Mammary epithelial cell (primary cell): ENCODE measurements at regions of chr1 and their contacts with region 1.

Region 1: GRCh38 chr1:227805606-227806197 is 9.8 kb upstream of the PRSS38 start:
- DNase-seq: peak; percentile 99
- H3K4me3 ChIP-seq: no peak overlapping the region
- H3K27ac ChIP-seq: peak overlapping the region; percentile 72
- H3K4me1 ChIP-seq: peaks cover 11% of the 10 kb centered on the region
- H3K27me3 ChIP-seq: no peaks in the 10 kb centered on the region
- CTCF ChIP-seq: peak; percentile 23 to 43

Region 2: GRCh38 chr1:227734856-227735538 is 70.7 kb before region 1 on chr1 and contains the starts of genes JMJD4 and SNAP47:
- CTCF ChIA-PET with region 1: no interaction called
- dilution Hi-C with region 1: no loop called
- in situ Hi-C with region 1: no loop called
- intact Hi-C with region 1: no loop called
- DNase-seq: peak; percentile 88
- H3K4me3 ChIP-seq: peak within 1 kb of the TSS; percentile 74 to 81 (median 78)
- H3K27ac ChIP-seq: peak within 1 kb of the TSS; percentile 51
- H3K4me1 ChIP-seq: peaks cover 12% of the 10 kb centered on the region
- H3K27me3 ChIP-seq: no peaks in the 10 kb centered on the region
- CTCF ChIP-seq: no peak
- total RNA-seq, gene JMJD4: 20.9 to 24.7 TPM
- total RNA-seq, gene SNAP47: 24.9 to 41.7 TPM

Region 3: DNA sequence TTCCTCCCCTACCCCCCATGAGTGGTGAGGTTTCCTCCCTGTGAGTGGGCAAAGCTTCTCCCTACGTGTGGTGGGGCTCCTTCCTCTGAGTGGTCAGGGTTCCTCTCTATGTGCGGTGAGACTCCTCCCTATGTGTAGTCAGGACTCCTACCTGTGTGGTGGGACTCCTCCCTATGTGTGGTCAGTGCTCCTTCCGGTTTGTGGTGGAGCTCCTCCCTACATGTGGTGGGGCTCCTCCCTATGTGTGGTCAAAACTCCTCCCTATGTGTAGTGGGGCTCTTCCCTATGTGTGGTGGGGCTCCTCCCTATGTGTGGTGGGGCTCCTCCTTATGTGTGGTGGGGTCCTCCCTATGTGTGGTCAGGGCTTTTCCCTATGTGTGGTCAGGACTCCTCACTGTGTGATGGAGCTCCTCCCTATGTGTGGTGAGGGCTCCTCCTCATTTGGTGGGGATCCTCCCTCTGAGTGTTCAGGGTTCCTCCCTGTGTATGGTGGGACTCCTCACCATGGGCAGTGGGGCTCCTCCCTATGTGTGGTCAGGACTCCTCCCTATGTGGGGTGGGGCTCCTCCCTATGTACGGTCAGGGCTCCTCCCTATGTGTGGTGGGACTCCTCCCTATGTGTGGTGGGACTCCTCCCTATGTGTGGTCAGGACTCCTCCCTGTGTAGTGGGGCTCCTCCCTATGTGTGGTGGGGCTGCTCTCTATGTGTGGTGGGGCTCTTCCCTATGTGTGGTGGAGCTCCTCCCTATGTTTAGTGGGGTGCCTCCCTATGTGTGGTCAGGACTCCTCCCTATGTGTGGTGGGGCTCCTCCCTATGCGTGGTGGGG is 38.8 kb after region 1 on chr1:
- CTCF ChIA-PET with region 1: no interaction called
- dilution Hi-C with region 1: loop called (anchors 5 kb)
- in situ Hi-C with region 1: no loop called
- intact Hi-C with region 1: no loop called
- DNase-seq: no peak
- H3K4me3 ChIP-seq: no peak overlapping the region
- H3K27ac ChIP-seq: no peak overlapping the region
- H3K4me1 ChIP-seq: no peaks in the 10 kb centered on the region
- H3K27me3 ChIP-seq: no peaks in the 10 kb centered on the region
- CTCF ChIP-seq: no peak

Region 4: DNA sequence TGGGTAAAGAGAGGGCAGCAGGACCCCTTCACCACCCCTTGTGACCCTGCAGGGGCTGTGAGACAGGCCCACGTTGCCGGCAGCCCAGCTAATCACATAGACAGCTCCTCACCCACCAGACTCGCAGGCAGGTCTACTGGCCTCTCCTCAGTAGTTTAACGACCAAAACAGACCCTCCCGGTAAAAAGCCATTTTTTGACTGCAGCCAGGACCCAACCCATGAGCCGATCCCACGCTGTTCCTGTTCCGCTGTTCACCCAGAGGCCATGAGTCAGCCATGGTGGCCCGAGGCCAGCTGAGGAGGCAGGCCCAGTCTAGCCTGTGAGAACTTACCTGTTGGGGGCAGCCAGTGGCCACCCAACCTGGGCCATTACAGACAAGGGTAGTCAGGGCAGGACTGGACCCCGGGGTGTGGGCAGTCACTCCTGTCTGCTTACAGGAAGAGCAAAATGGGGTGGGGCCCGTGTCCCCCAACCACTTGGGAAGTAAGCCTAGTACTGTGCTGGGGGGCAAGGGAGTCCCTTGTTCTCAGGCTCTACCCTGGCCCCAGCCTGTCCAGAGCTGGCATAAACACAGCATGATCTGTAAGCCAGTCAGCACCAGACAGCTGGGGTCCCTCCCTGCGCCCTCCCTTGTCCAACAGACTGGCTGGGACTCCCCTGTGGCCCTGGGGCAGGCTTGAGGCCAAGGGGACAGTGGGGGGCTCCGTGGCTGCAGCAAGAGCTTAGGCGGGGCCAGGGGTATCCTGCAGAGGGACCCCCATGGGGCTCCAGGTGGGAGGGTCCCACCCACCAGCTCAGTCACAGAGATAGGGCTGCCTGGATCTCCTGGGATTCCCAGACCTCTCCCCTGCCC is 80.2 kb after region 1 on chr1:
- CTCF ChIA-PET with region 1: no interaction called
- dilution Hi-C with region 1: no loop called
- in situ Hi-C with region 1: no loop called
- intact Hi-C with region 1: loop called (anchors 1 kb)
- DNase-seq: peak; percentile 85
- H3K4me3 ChIP-seq: peak overlapping the region in 1 of 3 experiments; percentile 32
- H3K27ac ChIP-seq: peak overlapping the region; percentile 72
- H3K4me1 ChIP-seq: peaks cover 24% of the 10 kb centered on the region
- H3K27me3 ChIP-seq: no peaks in the 10 kb centered on the region
- CTCF ChIP-seq: peak in 1 of 2 donors; percentile 27

Region 5: DNA sequence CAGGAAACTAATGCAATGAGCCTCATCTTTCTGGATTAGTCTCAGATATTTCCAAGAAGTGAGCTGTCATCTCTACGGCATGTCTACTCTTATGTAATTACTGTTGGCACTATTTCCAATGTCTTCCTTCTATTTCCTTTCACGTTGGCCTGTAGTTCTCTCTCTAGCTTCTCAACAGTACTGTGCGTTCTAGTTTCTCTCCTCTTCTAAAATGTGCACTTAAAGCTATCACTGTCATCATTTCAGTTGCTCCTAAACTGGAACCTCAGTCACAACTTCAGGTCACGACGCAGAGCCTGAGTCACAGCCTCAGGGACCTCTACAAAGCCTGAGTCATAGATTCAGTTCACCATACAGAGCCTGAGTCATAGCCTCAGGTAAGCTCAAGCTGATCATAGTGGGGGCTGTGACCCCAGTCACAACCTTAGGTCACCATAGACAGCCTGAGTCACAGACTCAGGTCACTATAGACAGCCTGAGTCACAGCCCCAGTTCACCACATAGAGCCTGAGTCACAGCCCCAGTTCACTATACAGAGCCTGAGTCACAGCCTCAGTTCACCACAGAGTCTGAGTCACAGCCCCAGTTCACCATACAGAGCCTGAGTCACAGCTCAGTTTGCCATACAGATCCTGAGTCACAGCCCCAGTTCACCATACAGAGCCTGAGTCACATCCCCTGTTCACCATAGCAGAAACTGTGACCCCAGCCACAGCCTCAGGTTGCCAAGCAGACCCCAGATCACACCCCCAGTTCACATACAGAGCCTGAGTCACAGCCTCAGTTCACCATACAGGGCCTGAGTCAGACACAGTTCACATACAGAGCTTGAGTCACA is 129.0 kb after region 1 on chr1:
- CTCF ChIA-PET with region 1: no interaction called
- dilution Hi-C with region 1: no loop called
- in situ Hi-C with region 1: loop called (anchors 10 kb)
- intact Hi-C with region 1: no loop called
- DNase-seq: peak; percentile 97
- H3K4me3 ChIP-seq: no peak overlapping the region
- H3K27ac ChIP-seq: peak overlapping the region; percentile 86
- H3K4me1 ChIP-seq: peaks cover 14% of the 10 kb centered on the region
- H3K27me3 ChIP-seq: no peaks in the 10 kb centered on the region
- CTCF ChIP-seq: no peak

Region 6: GRCh38 chr1:227954163-227954850 is 148.6 kb after region 1 on chr1:
- CTCF ChIA-PET with region 1: interaction called, 18 read pairs
- dilution Hi-C with region 1: no loop called
- in situ Hi-C with region 1: no loop called
- intact Hi-C with region 1: no loop called
- DNase-seq: no peak
- H3K4me3 ChIP-seq: no peak overlapping the region
- H3K27ac ChIP-seq: no peak overlapping the region
- H3K4me1 ChIP-seq: no peaks in the 10 kb centered on the region
- H3K27me3 ChIP-seq: no peaks in the 10 kb centered on the region
- CTCF ChIP-seq: no peak